ENCODE measurements at regions of chr12 and their contacts with region 1.

Region 1: GRCh38 chr12:54032627-54033100 is at the start of gene HOXC5:
- DNase-seq: peak; percentile 77
- ATAC-seq: no peak
- H3K4me3 Mint-ChIP-seq: peak within 1 kb of the TSS; percentile 31
- H3K27ac Mint-ChIP-seq: no peak within 1 kb of the TSS
- H3K4me1 Mint-ChIP-seq: peaks cover 18% of the 10 kb centered on the region
- H3K27me3 Mint-ChIP-seq: peaks cover 74% of the 10 kb centered on the region
- total RNA-seq, gene HOXC5: not detected

Region 2: GRCh38 chr12:53984901-53985709 is 47.6 kb before region 1 on chr12 and contains the start of gene HOXC10:
- CTCF ChIA-PET with region 1: interaction called, 20 read pairs
- POLR2A ChIA-PET with region 1: no interaction called
- DNase-seq: peak; percentile 86
- ATAC-seq: peak; percentile 74
- H3K4me3 Mint-ChIP-seq: peak within 1 kb of the TSS; percentile 48
- H3K27ac Mint-ChIP-seq: peak within 1 kb of the TSS; percentile 52
- H3K4me1 Mint-ChIP-seq: peaks cover 43% of the 10 kb centered on the region
- H3K27me3 Mint-ChIP-seq: peaks cover 93% of the 10 kb centered on the region
- total RNA-seq, gene HOXC10: not detected

Region 3: GRCh38 chr12:54005853-54006686 is 26.6 kb before region 1 on chr12:
- CTCF ChIA-PET with region 1: interaction called, 29 read pairs
- POLR2A ChIA-PET with region 1: interaction called, 5 read pairs
- DNase-seq: peak; percentile 88
- ATAC-seq: peak; percentile 82
- H3K4me3 Mint-ChIP-seq: peak overlapping the region; percentile 71
- H3K27ac Mint-ChIP-seq: no peak overlapping the region
- H3K4me1 Mint-ChIP-seq: peaks cover 20% of the 10 kb centered on the region
- H3K27me3 Mint-ChIP-seq: peaks cover 92% of the 10 kb centered on the region

Region 4: GRCh38 chr12:54053751-54054741 is 21.4 kb after region 1 on chr12 and contains the start of gene HOXC4:
- CTCF ChIA-PET with region 1: interaction called, 27 read pairs
- POLR2A ChIA-PET with region 1: interaction called, 3 read pairs
- DNase-seq: peak; percentile 51
- ATAC-seq: peak; percentile 67
- H3K4me3 Mint-ChIP-seq: peak within 1 kb of the TSS; percentile 74
- H3K27ac Mint-ChIP-seq: peak within 1 kb of the TSS; percentile 73
- H3K4me1 Mint-ChIP-seq: peaks cover 37% of the 10 kb centered on the region
- H3K27me3 Mint-ChIP-seq: peaks cover 82% of the 10 kb centered on the region
- total RNA-seq, gene HOXC4: 1.1 to 1.3 TPM

Region 5: DNA sequence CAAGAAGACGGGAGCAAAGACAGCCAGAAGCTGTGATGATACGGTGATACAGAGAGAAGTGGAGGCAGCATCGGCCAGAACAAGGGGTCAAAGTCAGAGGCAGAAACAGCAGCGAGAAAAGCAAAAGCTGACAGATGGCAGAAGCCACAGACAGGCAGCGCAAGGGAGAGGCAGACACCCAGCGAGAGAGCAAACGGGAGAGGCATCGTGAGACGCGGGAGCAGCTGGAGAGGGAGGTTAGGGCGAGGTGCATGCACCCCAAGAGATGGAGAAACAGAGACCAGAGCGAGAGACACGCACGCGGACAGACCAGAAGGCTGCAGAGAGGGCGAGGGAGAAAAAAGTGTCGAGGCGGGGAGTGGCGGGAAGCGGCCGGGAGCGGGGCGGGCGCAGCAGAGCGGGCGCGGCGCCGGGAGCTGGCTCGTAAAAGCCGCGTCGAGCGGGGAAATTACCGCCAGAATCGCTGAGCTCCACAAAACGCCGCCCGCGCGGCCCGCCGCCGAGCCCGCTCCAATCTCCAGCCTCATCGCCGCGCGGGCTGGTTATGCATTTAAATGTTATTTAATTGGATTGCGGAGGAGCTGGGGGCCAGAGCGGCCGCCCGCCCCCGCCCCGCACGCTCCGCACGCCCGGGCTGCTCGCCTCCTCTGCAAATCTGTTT is 140.5 kb after region 1 on chr12:
- CTCF ChIA-PET with region 1: interaction called, 29 read pairs
- POLR2A ChIA-PET with region 1: no interaction called
- DNase-seq: peak; percentile 34
- ATAC-seq: peak; percentile 75
- H3K4me3 Mint-ChIP-seq: no peak overlapping the region
- H3K27ac Mint-ChIP-seq: no peak overlapping the region
- H3K4me1 Mint-ChIP-seq: peaks cover 7% of the 10 kb centered on the region
- H3K27me3 Mint-ChIP-seq: no peaks in the 10 kb centered on the region

Region 6: DNA sequence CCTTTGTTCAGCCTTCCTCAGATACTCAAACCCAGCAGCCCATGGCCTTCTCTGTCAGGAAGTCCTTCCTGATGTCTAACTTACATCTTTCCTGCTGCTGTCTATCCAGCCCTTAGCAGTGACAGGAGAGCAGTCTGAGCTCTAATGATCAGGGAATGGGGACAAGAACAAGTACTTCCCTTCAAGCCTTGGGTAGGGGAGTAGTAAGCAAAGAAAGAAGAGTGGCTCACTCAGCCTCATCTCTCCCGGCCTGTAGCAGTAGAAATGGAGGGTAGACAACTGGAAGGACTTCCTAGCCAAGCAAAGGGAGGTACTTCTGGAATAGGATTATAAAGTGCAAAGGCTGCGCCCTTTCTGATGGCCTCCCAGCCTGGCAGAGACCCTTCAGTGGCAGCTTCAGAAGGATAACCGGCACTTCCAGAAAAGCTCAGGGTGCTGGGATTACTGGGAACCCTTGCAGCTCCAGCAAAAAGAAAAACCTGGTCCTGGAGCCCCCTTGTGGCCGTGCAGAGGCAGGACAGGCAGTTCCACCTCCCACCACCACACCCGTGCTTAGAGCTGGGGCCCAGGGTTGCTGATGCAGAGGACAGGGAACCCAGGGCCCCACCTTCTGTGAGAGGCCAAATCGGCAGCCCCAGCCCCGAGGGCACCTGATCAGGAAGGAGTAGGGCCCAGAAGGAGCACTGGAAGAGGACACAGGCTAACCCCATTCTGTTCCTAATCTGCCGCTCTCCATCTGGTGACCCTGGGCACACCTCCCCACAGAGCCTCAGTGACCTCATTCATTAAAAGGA is 168.5 kb after region 1 on chr12:
- CTCF ChIA-PET with region 1: interaction called, 248 read pairs
- POLR2A ChIA-PET with region 1: no interaction called
- DNase-seq: peak; percentile 74
- ATAC-seq: peak; percentile 94
- H3K4me3 Mint-ChIP-seq: no peak overlapping the region
- H3K27ac Mint-ChIP-seq: no peak overlapping the region
- H3K4me1 Mint-ChIP-seq: peaks cover 3% of the 10 kb centered on the region
- H3K27me3 Mint-ChIP-seq: peaks cover 44% of the 10 kb centered on the region

Region 7: GRCh38 chr12:54214553-54215406 is 182.1 kb after region 1 on chr12:
- CTCF ChIA-PET with region 1: interaction called, 39 read pairs
- POLR2A ChIA-PET with region 1: no interaction called
- DNase-seq: peak; percentile 96
- ATAC-seq: peak; percentile 87
- H3K4me3 Mint-ChIP-seq: peak overlapping the region; percentile 69
- H3K27ac Mint-ChIP-seq: peak overlapping the region; percentile 21
- H3K4me1 Mint-ChIP-seq: peaks cover 43% of the 10 kb centered on the region
- H3K27me3 Mint-ChIP-seq: peaks cover 39% of the 10 kb centered on the region